SK-N-SH (cell line): ENCODE measurements at regions of chr3 and their contacts with region 1.

Region 1: GRCh38 chr3:33883538-33883950 is 85.1 kb downstream of the PDCD6IP start:
- DNase-seq: peak; percentile 32
- H3K4me3 ChIP-seq: peak overlapping the region; percentile 14 to 32; a peak in 3 of 4 replicates
- H3K27ac ChIP-seq: peak overlapping the region in 1 of 2 experiments; percentile 3; a peak in 1 of 4 replicates
- H3K4me1 ChIP-seq: peaks cover 0 to 10% of the 10 kb centered on the region in 2 experiments; a peak in 3 of 4 replicates
- H3K27me3 ChIP-seq: no peaks in the 10 kb centered on the region
- CTCF ChIP-seq: peak; percentile 93
- EP300 ChIP-seq: no peak
- RAD21 ChIP-seq: peak; percentile 85

Region 2: DNA sequence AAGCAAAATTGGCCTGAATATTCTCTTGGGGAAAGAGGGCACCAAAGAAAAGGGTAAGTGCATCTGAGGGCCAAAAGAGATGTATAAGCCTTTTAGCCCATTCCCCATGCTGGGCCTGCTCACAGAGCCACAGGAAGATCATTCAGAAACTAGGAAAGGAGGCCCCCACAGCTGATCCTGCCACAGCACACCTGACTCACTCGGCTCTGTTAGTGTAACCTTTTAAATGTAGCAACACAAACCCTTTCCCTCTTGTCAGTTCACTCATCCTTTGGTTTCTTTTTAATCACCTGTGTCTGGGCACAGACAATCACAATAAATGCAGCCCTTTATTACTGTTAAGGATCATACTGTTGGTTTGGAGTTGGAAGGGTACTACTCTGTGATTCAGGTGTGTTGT is 15.2 kb before region 1 on chr3:
- CTCF ChIA-PET with region 1: interaction called, 10 read pairs
- POLR2A ChIA-PET with region 1: no interaction called
- DNase-seq: no peak
- H3K4me3 ChIP-seq: no peak overlapping the region
- H3K27ac ChIP-seq: no peak overlapping the region
- H3K4me1 ChIP-seq: peaks cover 3 to 12% of the 10 kb centered on the region in 2 experiments; a peak in 2 of 4 replicates
- H3K27me3 ChIP-seq: no peaks in the 10 kb centered on the region
- CTCF ChIP-seq: no peak
- EP300 ChIP-seq: no peak
- RAD21 ChIP-seq: no peak

Region 3: GRCh38 chr3:33897306-33897705 is 13.8 kb after region 1 on chr3:
- CTCF ChIA-PET with region 1: interaction called, 14 read pairs
- POLR2A ChIA-PET with region 1: no interaction called
- DNase-seq: no peak
- H3K4me3 ChIP-seq: no peak overlapping the region
- H3K27ac ChIP-seq: no peak overlapping the region
- H3K4me1 ChIP-seq: no peaks in the 10 kb centered on the region
- H3K27me3 ChIP-seq: no peaks in the 10 kb centered on the region
- CTCF ChIP-seq: no peak
- EP300 ChIP-seq: no peak
- RAD21 ChIP-seq: no peak

Region 4: DNA sequence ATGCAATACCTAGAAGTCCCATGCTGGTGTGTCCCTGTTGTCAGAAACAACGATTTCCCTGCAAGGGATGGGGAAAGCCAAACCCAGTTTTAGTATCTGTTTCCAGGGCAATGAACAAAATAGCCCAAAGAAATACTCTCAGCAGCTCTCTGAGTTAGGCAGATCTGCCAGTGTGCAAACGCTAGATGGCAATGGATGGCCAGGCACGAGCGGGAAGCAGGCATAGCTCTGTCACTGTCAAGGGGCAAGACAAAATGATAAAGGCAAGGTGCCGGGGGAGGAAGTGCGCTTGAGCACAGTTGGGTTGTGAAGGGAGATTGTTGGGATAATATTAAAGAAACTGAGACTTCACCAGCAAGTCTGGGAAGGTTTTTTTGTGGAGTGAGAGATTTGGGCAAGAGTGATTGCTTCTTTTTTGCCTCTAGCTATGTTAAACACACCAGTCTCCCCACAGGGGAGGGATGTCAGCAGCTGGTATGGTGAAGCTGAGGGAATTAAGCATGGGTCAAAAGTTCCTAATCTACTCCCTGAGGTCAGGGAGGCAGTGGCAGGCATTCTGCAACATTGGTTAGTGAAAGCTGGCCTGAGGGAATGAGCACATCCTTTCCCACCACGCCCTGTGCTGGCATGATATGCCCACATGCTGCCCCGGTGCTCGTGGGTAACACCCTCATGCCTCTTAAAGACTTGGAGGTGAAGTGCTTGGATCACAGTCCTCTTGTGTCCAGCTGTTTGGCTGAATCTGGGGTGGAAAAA is 32.4 kb after region 1 on chr3:
- CTCF ChIA-PET with region 1: interaction called, 10 read pairs
- POLR2A ChIA-PET with region 1: no interaction called
- DNase-seq: peak; percentile 24
- H3K4me3 ChIP-seq: no peak overlapping the region
- H3K27ac ChIP-seq: no peak overlapping the region; a peak in 1 of 4 replicates
- H3K4me1 ChIP-seq: peaks cover 20 to 44% of the 10 kb centered on the region in 2 experiments; a peak in 2 of 4 replicates
- H3K27me3 ChIP-seq: no peaks in the 10 kb centered on the region
- CTCF ChIP-seq: no peak
- EP300 ChIP-seq: no peak
- RAD21 ChIP-seq: peak; percentile 59

Region 5: DNA sequence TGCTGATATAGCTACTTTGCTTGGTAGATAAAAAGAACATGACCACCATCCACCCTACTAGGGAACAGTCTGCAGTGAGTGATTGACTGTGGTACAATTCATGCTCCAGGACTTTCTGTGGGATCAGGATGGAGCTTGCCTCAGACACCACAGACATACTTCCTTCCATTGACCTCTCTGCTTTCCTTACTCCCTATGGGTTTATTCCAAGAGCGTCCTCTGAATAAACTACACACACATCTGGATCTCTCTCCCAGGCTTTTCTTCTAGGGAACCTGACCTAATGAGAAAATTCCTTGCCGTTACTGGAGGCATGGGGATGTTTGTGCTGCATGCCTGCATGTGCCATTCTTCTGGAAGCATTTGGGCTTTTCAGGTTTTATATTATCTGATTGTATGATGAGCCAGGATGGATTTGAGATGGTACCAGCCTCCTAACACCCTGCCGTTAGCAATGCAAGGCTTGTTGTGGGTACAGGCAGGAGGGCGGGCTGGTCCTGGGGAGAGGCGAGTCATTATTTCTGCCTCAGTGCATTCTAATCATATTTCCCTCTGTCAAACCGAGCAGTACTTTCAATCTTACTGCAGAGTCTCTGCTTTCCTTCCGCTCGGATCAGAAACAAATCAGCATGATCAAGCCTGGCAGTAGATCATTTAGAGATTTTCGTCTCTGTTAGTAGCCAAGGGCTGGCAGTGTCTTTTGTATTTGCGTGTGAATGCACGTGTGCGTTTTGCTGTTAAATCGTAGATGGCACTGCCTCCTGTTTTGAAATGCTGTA is 194.1 kb after region 1 on chr3:
- CTCF ChIA-PET with region 1: no interaction called
- POLR2A ChIA-PET with region 1: no interaction called
- DNase-seq: peak; percentile 45
- H3K4me3 ChIP-seq: no peak overlapping the region; a peak in 2 of 4 replicates
- H3K27ac ChIP-seq: no peak overlapping the region; a peak in 1 of 4 replicates
- H3K4me1 ChIP-seq: peaks cover 0 to 10% of the 10 kb centered on the region in 2 experiments; a peak in 3 of 4 replicates
- H3K27me3 ChIP-seq: no peaks in the 10 kb centered on the region
- CTCF ChIP-seq: no peak
- EP300 ChIP-seq: peak in 1 of 2 experiments; percentile 12; a peak in 1 of 4 replicates
- RAD21 ChIP-seq: no peak

Region 6: GRCh38 chr3:34260271-34261006 is 376.9 kb after region 1 on chr3:
- CTCF ChIA-PET with region 1: interaction called, 20 read pairs
- POLR2A ChIA-PET with region 1: no interaction called
- DNase-seq: peak; percentile 47
- H3K4me3 ChIP-seq: peak overlapping the region in 1 of 2 experiments; percentile 5; a peak in 1 of 4 replicates
- H3K27ac ChIP-seq: peak overlapping the region in 1 of 2 experiments; percentile 94; a peak in 2 of 4 replicates
- H3K4me1 ChIP-seq: peaks cover 32 to 42% of the 10 kb centered on the region in 2 experiments; a peak in 3 of 4 replicates
- H3K27me3 ChIP-seq: no peaks in the 10 kb centered on the region
- CTCF ChIP-seq: peak; percentile 62
- EP300 ChIP-seq: no peak
- RAD21 ChIP-seq: peak; percentile 70

Region 7: GRCh38 chr3:34683851-34684250 is 800.3 kb after region 1 on chr3:
- CTCF ChIA-PET with region 1: interaction called, 50 read pairs
- POLR2A ChIA-PET with region 1: interaction called, 5 read pairs
- DNase-seq: peak; percentile 4
- H3K4me3 ChIP-seq: no peak overlapping the region
- H3K27ac ChIP-seq: no peak overlapping the region; a peak in 1 of 4 replicates
- H3K4me1 ChIP-seq: no peaks in the 10 kb centered on the region
- H3K27me3 ChIP-seq: no peaks in the 10 kb centered on the region
- CTCF ChIP-seq: peak; percentile 30
- EP300 ChIP-seq: no peak
- RAD21 ChIP-seq: peak; percentile 79